Dendritic cell treated with granulocyte-macrophage colony-stimulating factor and Interleukin-4, amounts not matched to agents 40 ng/mL and 50 ng/mL, for 4 days (primary cell): ENCODE measurements at regions of chr3 and their contacts with region 1.

Region 1: DNA sequence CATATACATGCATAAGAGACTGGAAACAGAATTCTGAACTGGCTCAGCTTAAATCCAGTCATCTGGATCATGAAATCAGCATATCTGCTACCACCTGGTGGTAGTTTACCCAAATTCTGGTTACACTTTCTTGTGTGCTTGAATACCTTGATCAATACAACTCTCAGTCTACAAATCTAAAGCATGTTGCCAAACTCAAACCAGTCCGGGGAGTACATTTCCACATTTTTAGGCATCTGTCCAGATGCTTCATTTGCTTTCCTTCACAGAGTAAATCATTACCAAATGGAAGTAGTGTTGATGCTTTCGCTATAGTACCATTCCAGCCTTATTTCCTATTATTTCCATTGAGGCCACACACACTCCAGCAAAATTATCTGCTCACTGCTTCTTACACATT is 126.4 kb downstream of the P2RY1 start:
- H3K4me3 Mint-ChIP-seq: no peak overlapping the region
- H3K27ac Mint-ChIP-seq: peak overlapping the region; percentile 2
- H3K4me1 Mint-ChIP-seq: peaks cover 33% of the 10 kb centered on the region
- H3K27me3 Mint-ChIP-seq: no peaks in the 10 kb centered on the region

Region 2: DNA sequence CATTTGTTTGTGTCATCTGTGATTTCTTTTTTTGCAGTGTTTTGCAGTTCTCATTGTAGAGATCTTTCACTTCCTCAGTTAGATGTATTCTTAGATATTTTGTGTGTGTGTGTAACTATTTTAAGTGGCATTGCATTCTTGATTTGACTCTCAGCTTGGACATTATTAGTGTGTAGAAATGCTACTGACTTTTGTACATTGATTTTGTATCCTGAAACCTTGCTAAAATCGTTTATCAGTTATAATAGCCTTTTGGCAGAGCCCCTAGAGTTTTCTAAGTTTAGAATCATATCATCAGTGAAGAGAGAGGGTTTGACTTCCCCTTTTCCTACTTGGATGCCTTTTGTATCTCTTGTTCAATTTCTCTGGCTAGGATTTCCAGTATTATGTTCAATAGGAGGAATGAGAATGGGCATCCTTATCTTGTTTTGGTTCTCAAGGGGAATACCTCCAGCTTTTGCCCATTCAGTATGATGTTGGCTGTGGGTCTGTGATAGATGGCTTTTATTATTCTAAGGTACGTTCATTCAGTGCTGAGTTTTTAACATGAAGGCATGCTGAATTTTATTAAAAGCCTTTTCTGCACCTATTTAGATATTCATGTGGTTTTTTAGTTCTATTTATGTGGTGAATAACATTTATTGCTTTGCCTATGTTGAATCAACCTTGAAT is 480.9 kb before region 1 on chr3:
- intact Hi-C with region 1: loop called (anchors 10 kb)
- H3K4me3 Mint-ChIP-seq: no peak overlapping the region
- H3K27ac Mint-ChIP-seq: no peak overlapping the region
- H3K4me1 Mint-ChIP-seq: peaks cover 20% of the 10 kb centered on the region
- H3K27me3 Mint-ChIP-seq: peaks cover 5% of the 10 kb centered on the region

Region 3: GRCh38 chr3:152834776-152835600 is 126.3 kb before region 1 on chr3 and contains the start of gene P2RY1:
- intact Hi-C with region 1: loop called (anchors 10 kb)
- H3K4me3 Mint-ChIP-seq: peak within 1 kb of the TSS; percentile 95
- H3K27ac Mint-ChIP-seq: peak within 1 kb of the TSS; percentile 98
- H3K4me1 Mint-ChIP-seq: peaks cover 44% of the 10 kb centered on the region
- H3K27me3 Mint-ChIP-seq: peaks cover 8% of the 10 kb centered on the region